ENCODE measurements at regions of chr4 and their contacts with region 1.

Region 1: DNA sequence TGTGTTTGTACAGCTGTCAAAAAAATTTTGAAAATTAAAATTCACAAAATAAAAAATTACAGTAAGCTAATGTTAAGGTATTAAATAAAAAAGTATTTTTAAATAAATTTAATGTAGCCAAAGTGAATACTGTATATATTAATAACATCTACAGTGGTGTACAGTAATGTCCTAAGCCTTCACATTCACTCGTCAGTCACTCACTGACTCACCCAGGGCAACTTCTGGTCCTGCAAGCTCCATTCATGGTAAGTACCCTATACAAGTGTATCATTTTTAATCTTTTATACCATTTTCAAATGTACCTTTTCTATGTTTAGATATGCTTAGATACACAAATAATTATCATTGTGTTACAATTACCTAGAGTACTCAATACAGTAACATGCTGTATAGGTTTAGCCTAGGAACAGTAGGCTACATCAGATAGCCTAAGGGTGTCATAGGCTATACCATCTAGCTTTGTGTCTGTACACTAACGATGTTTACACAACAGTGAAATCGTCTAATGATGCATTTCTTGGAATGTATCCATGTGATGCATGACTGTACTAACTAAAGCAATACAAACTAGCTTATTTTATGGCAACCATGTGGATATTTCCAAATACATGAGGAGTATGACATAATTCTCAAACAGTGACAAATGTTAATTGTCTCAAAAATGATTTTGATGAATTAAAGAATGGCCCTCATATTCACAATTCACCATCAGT is 13.7 kb downstream of the DDX60 start:
- DNase-seq: no peak
- H3K4me3 Mint-ChIP-seq: no peak overlapping the region
- H3K27ac Mint-ChIP-seq: no peak overlapping the region
- H3K4me1 Mint-ChIP-seq: peaks cover 34% of the 10 kb centered on the region
- H3K27me3 Mint-ChIP-seq: no peaks in the 10 kb centered on the region

Region 2: GRCh38 chr4:168318266-168318895 is 13.5 kb after region 1 on chr4 and contains the start of gene DDX60:
- CTCF ChIA-PET with region 1: interaction called, 7 read pairs
- POLR2A ChIA-PET with region 1: interaction called, 60 read pairs
- DNase-seq: peak; percentile 91
- H3K4me3 Mint-ChIP-seq: peak within 1 kb of the TSS; percentile 94
- H3K27ac Mint-ChIP-seq: peak within 1 kb of the TSS; percentile 97
- H3K4me1 Mint-ChIP-seq: peaks cover 58% of the 10 kb centered on the region
- H3K27me3 Mint-ChIP-seq: no peaks in the 10 kb centered on the region
- total RNA-seq, gene DDX60: 140 to 147 TPM

Region 3: GRCh38 chr4:168362025-168362401 is 57.1 kb after region 1 on chr4:
- CTCF ChIA-PET with region 1: no interaction called
- POLR2A ChIA-PET with region 1: no interaction called
- DNase-seq: no peak
- H3K4me3 Mint-ChIP-seq: no peak overlapping the region
- H3K27ac Mint-ChIP-seq: no peak overlapping the region
- H3K4me1 Mint-ChIP-seq: peaks cover 15% of the 10 kb centered on the region
- H3K27me3 Mint-ChIP-seq: no peaks in the 10 kb centered on the region

Measured in activated CD4-positive, alpha-beta memory T cell treated with anti-CD3 and anti-CD28 coated beads, Interleukin-2, amount 10 ng/mL, durations not matched to agents 7 days and 5 days (primary cell).